Heart left ventricle (tissue), 16 donors: ENCODE measurements at regions of chr10 and their contacts with region 1.

Region 1: GRCh38 chr10:17617031-17617911 is at the start of gene HACD1:
- DNase-seq: peak; percentile 61 to 86 (median 79)
- ATAC-seq: peak; percentile 52 to 90 (median 86)
- H3K4me3 ChIP-seq: peak within 1 kb of the TSS; percentile 66 to 96 (median 86)
- H3K27ac ChIP-seq: peak within 1 kb of the TSS; percentile 85 to 99 (median 98)
- H3K4me1 ChIP-seq: peaks cover 0 to 28% (median 4%) of the 10 kb centered on the region in 12 donors
- H3K27me3 ChIP-seq: peaks cover 0 to 11% (median 0%) of the 10 kb centered on the region in 9 donors
- CTCF ChIP-seq: peak in 5 of 12 donors; percentile 10 to 48 (median 41)
- POLR2A ChIP-seq: peak in 1 of 2 donors; percentile 79
- total RNA-seq, gene HACD1: 98.6 to 291 (median 155) TPM

Region 2: GRCh38 chr10:17585016-17585415 is 32.3 kb before region 1 on chr10:
- intact Hi-C with region 1: no loop called
- DNase-seq: no peak
- ATAC-seq: peak in 2 of 4 donors; percentile 28 to 52
- H3K4me3 ChIP-seq: no peak overlapping the region
- H3K27ac ChIP-seq: no peak overlapping the region
- H3K4me1 ChIP-seq: peaks cover 0 to 13% (median 2%) of the 10 kb centered on the region in 12 donors
- H3K27me3 ChIP-seq: no peaks in the 10 kb centered on the region
- CTCF ChIP-seq: no peak
- POLR2A ChIP-seq: no peak

Region 3: DNA sequence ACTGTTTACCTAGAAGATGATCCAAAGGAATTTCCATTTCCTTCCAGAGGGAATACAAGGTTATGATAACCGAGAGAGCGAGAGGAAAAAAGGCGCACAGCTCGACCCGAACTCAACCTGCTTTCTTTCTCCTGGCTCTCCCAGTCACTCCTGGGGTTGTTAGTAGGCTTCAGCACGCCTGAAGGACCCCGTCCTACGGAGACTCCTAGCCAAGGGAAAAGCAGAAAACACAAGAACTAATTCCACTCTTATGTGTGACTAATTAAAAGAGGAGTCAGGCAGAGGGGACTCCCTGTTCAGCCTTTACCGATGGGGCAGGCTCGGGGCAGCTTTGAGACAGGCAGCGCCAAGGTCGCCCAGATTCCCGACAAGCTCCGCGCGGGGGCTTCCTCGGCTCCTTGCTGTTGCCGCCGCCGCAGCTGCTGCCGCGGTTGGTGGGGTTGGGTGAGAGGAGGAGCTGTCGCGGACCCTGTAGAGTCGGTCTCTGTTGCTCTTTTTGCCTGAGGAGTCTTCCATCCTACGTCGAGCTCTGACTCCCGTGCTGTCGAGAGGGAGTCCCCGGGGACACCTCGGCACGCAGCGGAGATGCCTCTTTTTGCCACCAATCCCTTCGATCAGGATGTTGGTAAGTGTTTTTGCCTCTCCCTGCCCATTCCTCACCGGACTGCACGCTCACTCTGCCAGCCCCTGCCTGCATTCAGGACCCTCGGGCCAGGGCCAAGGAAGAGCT is 26.6 kb after region 1 on chr10 and contains the start of gene STAM:
- intact Hi-C with region 1: loop called in 1 of 10 experiments (anchors 1 kb)
- DNase-seq: peak; percentile 90 to 96 (median 94)
- ATAC-seq: peak; percentile 83 to 95 (median 94)
- H3K4me3 ChIP-seq: peak within 1 kb of the TSS; percentile 72 to 98 (median 86)
- H3K27ac ChIP-seq: peak within 1 kb of the TSS; percentile 95 to 100 (median 98)
- H3K4me1 ChIP-seq: peaks cover 0 to 53% (median 43%) of the 10 kb centered on the region in 12 donors
- H3K27me3 ChIP-seq: no peaks in the 10 kb centered on the region
- CTCF ChIP-seq: no peak
- POLR2A ChIP-seq: peak in 1 of 2 donors; percentile 60
- total RNA-seq, gene STAM: 26.5 to 40.0 (median 32.9) TPM

Region 4: GRCh38 chr10:17730667-17731066 is 113.4 kb after region 1 on chr10:
- intact Hi-C with region 1: loop called in 2 of 10 experiments (anchors 2 kb)
- DNase-seq: peak in 4 of 5 donors; percentile 31 to 59 (median 50)
- ATAC-seq: peak; percentile 70 to 91 (median 86)
- H3K4me3 ChIP-seq: no peak overlapping the region
- H3K27ac ChIP-seq: peak overlapping the region in 7 of 12 donors; percentile 28 to 77 (median 72)
- H3K4me1 ChIP-seq: peaks cover 0 to 19% (median 8%) of the 10 kb centered on the region in 12 donors
- H3K27me3 ChIP-seq: no peaks in the 10 kb centered on the region
- CTCF ChIP-seq: no peak
- POLR2A ChIP-seq: no peak

Region 5: DNA sequence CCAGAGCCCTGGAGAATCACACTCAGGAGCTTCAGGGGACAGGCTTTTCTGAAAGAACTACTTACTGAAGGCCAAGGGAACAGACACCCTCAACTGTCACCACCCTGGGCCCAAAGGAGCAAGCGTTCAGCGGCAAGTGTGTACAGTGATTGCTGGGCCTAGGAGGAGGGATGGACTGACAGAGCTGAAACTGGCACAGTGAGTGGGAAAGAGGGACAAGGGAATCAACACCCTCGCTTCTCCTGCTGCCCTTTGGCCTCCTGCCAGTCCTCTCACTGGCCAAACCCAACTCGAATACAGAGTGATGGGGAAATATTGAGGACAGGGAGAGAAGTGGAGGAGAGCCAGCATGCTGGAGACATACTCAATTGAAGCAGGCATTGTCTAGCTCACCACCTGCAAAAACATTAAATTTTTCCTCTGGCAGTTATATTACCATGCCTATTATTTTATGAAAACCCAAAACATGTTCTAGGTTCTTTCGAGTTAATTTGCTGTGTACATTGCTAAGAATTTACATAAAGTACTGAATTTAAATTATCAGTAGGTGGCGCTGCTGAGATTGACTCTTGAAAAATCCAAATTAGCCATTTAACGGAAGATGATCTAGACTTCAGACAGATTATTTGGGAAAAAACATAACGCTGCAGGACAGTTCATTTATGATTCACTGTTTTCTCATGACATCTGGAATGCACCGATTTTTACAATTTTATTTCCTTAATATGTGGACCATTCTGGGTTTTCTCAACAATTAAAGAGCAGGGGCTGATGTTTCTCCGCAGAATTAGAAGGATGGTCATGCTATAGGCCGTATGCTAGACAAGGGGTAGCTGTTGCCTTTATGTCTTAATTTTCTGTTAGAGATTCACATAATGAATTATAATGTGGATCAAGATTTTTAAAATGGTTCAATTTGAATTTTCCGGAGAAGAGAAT is 120.0 kb after region 1 on chr10:
- intact Hi-C with region 1: loop called in 2 of 10 experiments (anchors 2 kb)
- DNase-seq: peak in 4 of 5 donors; percentile 35 to 83 (median 53)
- ATAC-seq: peak; percentile 34 to 71 (median 42)
- H3K4me3 ChIP-seq: no peak overlapping the region
- H3K27ac ChIP-seq: peak overlapping the region in 5 of 12 donors; percentile 12 to 83 (median 16)
- H3K4me1 ChIP-seq: peaks cover 0 to 26% (median 13%) of the 10 kb centered on the region in 12 donors
- H3K27me3 ChIP-seq: no peaks in the 10 kb centered on the region
- CTCF ChIP-seq: peak; percentile 46 to 82 (median 64)
- POLR2A ChIP-seq: no peak

Region 6: GRCh38 chr10:17742918-17743317 is 125.6 kb after region 1 on chr10:
- intact Hi-C with region 1: loop called in 1 of 10 experiments (anchors 2 kb)
- DNase-seq: peak; percentile 29 to 70 (median 56)
- ATAC-seq: no peak
- H3K4me3 ChIP-seq: peak overlapping the region in 2 of 12 donors; percentile 21 to 24
- H3K27ac ChIP-seq: no peak overlapping the region
- H3K4me1 ChIP-seq: peaks cover 0 to 29% (median 4%) of the 10 kb centered on the region in 12 donors
- H3K27me3 ChIP-seq: no peaks in the 10 kb centered on the region
- CTCF ChIP-seq: peak; percentile 72 to 89 (median 86)
- POLR2A ChIP-seq: no peak